ENCODE measurements at regions of chr17 and their contacts with region 1.

Region 1: DNA sequence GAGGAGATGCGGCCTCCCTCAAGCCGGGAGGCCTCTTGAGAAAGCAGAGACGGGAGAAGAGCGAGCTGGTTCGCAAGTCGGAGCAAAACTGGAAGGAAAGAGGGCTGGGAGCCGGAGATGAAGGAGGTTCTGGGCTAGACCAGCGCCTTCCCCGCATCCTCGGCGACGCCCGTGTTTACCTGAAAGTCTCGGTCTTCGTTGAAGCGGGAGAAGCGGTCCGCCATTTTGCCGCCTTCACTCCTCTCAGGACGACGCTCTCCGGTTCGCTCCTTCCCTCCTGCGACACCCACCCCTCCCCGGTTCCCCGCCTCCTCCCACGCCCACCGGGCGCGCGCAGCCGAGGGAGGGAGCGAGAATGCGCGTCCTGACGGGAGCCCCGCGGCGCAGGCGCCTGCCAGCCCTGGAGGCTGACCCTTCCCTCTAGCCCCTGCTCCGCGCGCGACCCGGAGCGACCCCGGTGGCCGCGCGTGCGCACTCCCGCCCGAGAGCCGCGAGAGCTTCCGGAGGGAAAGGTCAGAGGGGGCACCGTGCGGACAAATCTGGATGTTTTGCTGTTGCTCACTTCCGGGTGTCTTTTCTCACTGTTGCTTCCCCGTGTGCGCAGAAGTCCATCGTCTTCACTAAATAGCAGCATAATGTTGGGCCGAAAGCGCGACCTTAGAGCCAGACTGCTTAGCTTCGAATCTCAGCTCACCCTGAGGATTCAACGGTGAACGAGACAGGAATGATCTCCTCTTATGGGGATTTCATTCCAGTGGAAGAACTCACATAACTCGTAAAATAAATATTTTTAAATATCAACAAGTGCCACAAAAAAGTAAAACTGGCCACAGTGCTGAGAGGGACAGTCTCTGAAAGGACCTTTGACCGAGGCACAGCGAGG is at the start of gene GPATCH8:
- DNase-seq: peak; percentile 96 to 99 (median 98)
- ATAC-seq: peak; percentile 97 to 99
- H3K4me3 ChIP-seq: peak within 1 kb of the TSS; percentile 67
- H3K27ac ChIP-seq: peak within 1 kb of the TSS; percentile 87
- H3K4me1 ChIP-seq: no peaks in the 10 kb centered on the region
- H3K27me3 ChIP-seq: no peaks in the 10 kb centered on the region
- total RNA-seq, gene GPATCH8: 32.4 to 35.9 (median 33.9) TPM

Region 2: GRCh38 chr17:44400226-44400847 is 103.1 kb before region 1 on chr17:
- intact Hi-C with region 1: loop called in 1 of 4 experiments (anchors 10 kb)
- DNase-seq: no peak
- ATAC-seq: no peak
- H3K4me3 ChIP-seq: no peak overlapping the region
- H3K27ac ChIP-seq: no peak overlapping the region
- H3K4me1 ChIP-seq: no peaks in the 10 kb centered on the region
- H3K27me3 ChIP-seq: no peaks in the 10 kb centered on the region

Region 3: GRCh38 chr17:44417553-44417952 is 85.8 kb before region 1 on chr17:
- intact Hi-C with region 1: loop called in 1 of 4 experiments (anchors 10 kb)
- DNase-seq: no peak
- ATAC-seq: no peak
- H3K4me3 ChIP-seq: no peak overlapping the region
- H3K27ac ChIP-seq: no peak overlapping the region
- H3K4me1 ChIP-seq: no peaks in the 10 kb centered on the region
- H3K27me3 ChIP-seq: no peaks in the 10 kb centered on the region